Naive thymus-derived CD4-positive, alpha-beta T cell (primary cell): ENCODE measurements at regions of chr20 and their contacts with region 1.

Region 1: DNA sequence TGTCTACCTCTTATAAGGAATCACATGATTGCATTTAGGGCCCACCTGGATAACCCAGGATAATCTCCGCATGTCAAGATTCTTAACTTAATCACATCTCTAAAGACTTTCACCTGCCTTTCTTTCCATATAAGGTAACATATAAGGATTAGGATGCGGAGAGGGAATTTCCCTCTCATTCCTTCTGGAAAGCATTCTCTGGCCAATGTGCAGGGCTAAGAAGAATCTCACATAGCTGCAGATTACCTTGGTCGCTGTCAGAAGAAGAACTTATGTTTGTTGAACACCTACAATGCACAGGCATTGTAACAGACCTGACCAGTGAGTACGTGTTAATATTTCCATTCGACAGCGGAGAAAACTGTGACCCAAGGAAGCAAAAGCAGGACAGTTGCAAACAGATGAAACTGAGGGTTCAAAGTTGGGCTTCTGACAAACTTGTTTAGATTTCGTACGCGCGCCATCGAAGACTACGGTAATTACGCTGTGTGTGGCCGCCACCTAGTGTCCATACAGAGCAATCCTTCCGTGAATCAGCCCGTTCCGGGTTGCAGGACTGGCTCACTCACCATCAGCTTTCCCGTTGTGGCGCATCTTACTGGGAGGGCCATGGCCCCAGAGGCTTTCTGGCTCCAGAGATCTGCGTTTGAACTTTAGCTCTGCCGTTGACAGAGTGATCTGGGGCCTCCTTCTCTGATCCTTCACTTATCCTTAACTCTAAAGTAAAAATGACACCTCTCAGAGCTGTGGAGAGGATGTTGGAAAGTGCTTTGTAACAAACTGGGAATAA is 9.5 kb downstream of the C20orf202 start:
- DNase-seq: peak; percentile 40 to 72 (median 60)
- ATAC-seq: peak; percentile 94
- H3K4me3 ChIP-seq: no peak overlapping the region
- H3K4me3 Mint-ChIP-seq: peak overlapping the region in 4 of 10 donors; percentile 9 to 41 (median 36)
- H3K27ac ChIP-seq: no peak overlapping the region
- H3K27ac Mint-ChIP-seq: peak overlapping the region in 5 of 9 donors; percentile 0 to 97 (median 37)
- H3K4me1 ChIP-seq: peaks cover 5 to 27% of the 10 kb centered on the region in 2 donors
- H3K4me1 Mint-ChIP-seq: peaks cover 21 to 51% (median 36%) of the 10 kb centered on the region in 7 donors
- H3K27me3 ChIP-seq: no peaks in the 10 kb centered on the region
- H3K27me3 Mint-ChIP-seq: peaks cover 0 to 16% (median 0%) of the 10 kb centered on the region in 5 donors

Region 2: GRCh38 chr20:543369-544152 is 669.2 kb before region 1 on chr20 and contains the start of gene CSNK2A1:
- CTCF ChIA-PET with region 1: no interaction called
- POLR2A ChIA-PET with region 1: no interaction called
- intact Hi-C with region 1: loop called in 1 of 2 experiments (anchors 10 kb)
- DNase-seq: peak; percentile 93 to 99 (median 97)
- ATAC-seq: peak; percentile 97
- H3K4me3 ChIP-seq: peak within 1 kb of the TSS; percentile 59
- H3K4me3 Mint-ChIP-seq: peak within 1 kb of the TSS; percentile 86 to 100 (median 91)
- H3K27ac ChIP-seq: peak within 1 kb of the TSS; percentile 94
- H3K27ac Mint-ChIP-seq: peak within 1 kb of the TSS; percentile 97 to 100 (median 98)
- H3K4me1 ChIP-seq: peaks cover 17 to 39% of the 10 kb centered on the region in 2 donors
- H3K4me1 Mint-ChIP-seq: peaks cover 40 to 58% (median 54%) of the 10 kb centered on the region in 7 donors
- H3K27me3 ChIP-seq: no peaks in the 10 kb centered on the region
- H3K27me3 Mint-ChIP-seq: peaks cover 0 to 9% (median 5%) of the 10 kb centered on the region in 5 donors
- total RNA-seq, gene CSNK2A1: 69.7 to 117 (median 90.8) TPM

Region 3: GRCh38 chr20:956330-956951 is 256.4 kb before region 1 on chr20:
- CTCF ChIA-PET with region 1: interaction called, 11 read pairs
- POLR2A ChIA-PET with region 1: no interaction called
- intact Hi-C with region 1: loop called (anchors 1 to 5 kb)
- DNase-seq: peak; percentile 48 to 80 (median 69)
- ATAC-seq: peak; percentile 85
- H3K4me3 ChIP-seq: no peak overlapping the region
- H3K4me3 Mint-ChIP-seq: no peak overlapping the region
- H3K27ac ChIP-seq: no peak overlapping the region
- H3K27ac Mint-ChIP-seq: no peak overlapping the region
- H3K4me1 ChIP-seq: no peaks in the 10 kb centered on the region
- H3K4me1 Mint-ChIP-seq: peaks cover 0 to 8% (median 0%) of the 10 kb centered on the region in 7 donors
- H3K27me3 ChIP-seq: no peaks in the 10 kb centered on the region
- H3K27me3 Mint-ChIP-seq: peaks cover 18 to 55% (median 39%) of the 10 kb centered on the region in 5 donors

Region 4: DNA sequence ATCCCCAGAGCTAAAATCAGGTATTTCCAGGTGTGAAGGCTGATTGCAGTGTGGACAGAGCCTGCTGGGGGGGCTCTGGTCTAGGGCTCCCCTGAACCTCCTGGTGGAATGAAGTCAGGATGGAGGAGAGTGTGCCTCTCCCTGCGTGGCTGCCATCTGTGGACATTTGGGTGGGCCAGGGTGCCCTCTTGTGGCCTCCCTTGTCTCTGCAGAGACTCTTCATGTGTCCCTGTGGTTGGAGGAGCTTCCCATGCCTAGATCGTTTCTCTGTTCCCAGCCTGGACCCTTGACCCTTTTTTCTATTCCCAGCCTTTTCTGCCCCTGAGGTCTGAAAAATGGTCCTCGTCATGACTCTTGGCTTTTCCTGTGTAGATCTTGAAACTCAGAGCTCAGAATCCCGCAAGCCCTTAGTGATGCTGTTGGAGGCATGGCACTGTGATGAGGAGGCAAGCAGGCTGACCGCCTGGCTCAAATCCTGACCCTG is 104.3 kb before region 1 on chr20:
- CTCF ChIA-PET with region 1: interaction called, 20 read pairs
- POLR2A ChIA-PET with region 1: no interaction called
- intact Hi-C with region 1: loop called (anchors 1 kb)
- DNase-seq: peak in 8 of 9 donors; percentile 18 to 51 (median 43)
- ATAC-seq: peak; percentile 87
- H3K4me3 ChIP-seq: no peak overlapping the region
- H3K4me3 Mint-ChIP-seq: no peak overlapping the region
- H3K27ac ChIP-seq: no peak overlapping the region
- H3K27ac Mint-ChIP-seq: peak overlapping the region in 1 of 9 donors; percentile 60
- H3K4me1 ChIP-seq: no peaks in the 10 kb centered on the region
- H3K4me1 Mint-ChIP-seq: peaks cover 5 to 7% (median 6%) of the 10 kb centered on the region in 7 donors
- H3K27me3 ChIP-seq: no peaks in the 10 kb centered on the region
- H3K27me3 Mint-ChIP-seq: peaks cover 0 to 10% (median 0%) of the 10 kb centered on the region in 5 donors

Region 5: GRCh38 chr20:1266167-1266973 is 53.6 kb after region 1 on chr20 and contains the start of gene SNPH:
- CTCF ChIA-PET with region 1: interaction called, 3 read pairs
- POLR2A ChIA-PET with region 1: interaction called, 6 read pairs
- intact Hi-C with region 1: loop called in 1 of 2 experiments (anchors 2 kb)
- DNase-seq: peak; percentile 41 to 79 (median 67)
- ATAC-seq: peak; percentile 93
- H3K4me3 ChIP-seq: peak within 1 kb of the TSS; percentile 66
- H3K4me3 Mint-ChIP-seq: peak within 1 kb of the TSS; percentile 79 to 99 (median 93)
- H3K27ac ChIP-seq: peak within 1 kb of the TSS; percentile 88
- H3K27ac Mint-ChIP-seq: peak within 1 kb of the TSS; percentile 77 to 100 (median 98)
- H3K4me1 ChIP-seq: peaks cover 9 to 54% of the 10 kb centered on the region in 2 donors
- H3K4me1 Mint-ChIP-seq: peaks cover 22 to 87% (median 81%) of the 10 kb centered on the region in 7 donors
- H3K27me3 ChIP-seq: no peaks in the 10 kb centered on the region
- H3K27me3 Mint-ChIP-seq: peaks cover 0 to 5% (median 0%) of the 10 kb centered on the region in 5 donors
- total RNA-seq, gene SNPH: 7.3 to 43.4 (median 22.5) TPM

Region 6: GRCh38 chr20:1299522-1299921 is 86.7 kb after region 1 on chr20:
- CTCF ChIA-PET with region 1: interaction called, 5 read pairs
- POLR2A ChIA-PET with region 1: interaction called, 3 read pairs
- intact Hi-C with region 1: loop called in 1 of 2 experiments (anchors 2 kb)
- DNase-seq: peak in 6 of 9 donors; percentile 12 to 39 (median 32)
- ATAC-seq: peak; percentile 64
- H3K4me3 ChIP-seq: no peak overlapping the region
- H3K4me3 Mint-ChIP-seq: peak overlapping the region in 7 of 10 donors; percentile 40 to 62 (median 58)
- H3K27ac ChIP-seq: peak overlapping the region; percentile 17
- H3K27ac Mint-ChIP-seq: peak overlapping the region; percentile 52 to 93 (median 75)
- H3K4me1 ChIP-seq: peaks cover 12 to 23% of the 10 kb centered on the region in 2 donors
- H3K4me1 Mint-ChIP-seq: peaks cover 20 to 36% (median 32%) of the 10 kb centered on the region in 7 donors
- H3K27me3 ChIP-seq: no peaks in the 10 kb centered on the region
- H3K27me3 Mint-ChIP-seq: no peaks in the 10 kb centered on the region

Region 7: GRCh38 chr20:1465470-1466210 is 252.8 kb after region 1 on chr20:
- CTCF ChIA-PET with region 1: no interaction called
- POLR2A ChIA-PET with region 1: no interaction called
- intact Hi-C with region 1: no loop called
- DNase-seq: peak in 1 of 9 donors; percentile 4
- ATAC-seq: no peak
- H3K4me3 ChIP-seq: peak overlapping the region; percentile 59
- H3K4me3 Mint-ChIP-seq: peak overlapping the region; percentile 81 to 90 (median 86)
- H3K27ac ChIP-seq: peak overlapping the region; percentile 82
- H3K27ac Mint-ChIP-seq: peak overlapping the region in 8 of 9 donors; percentile 51 to 84 (median 78)
- H3K4me1 ChIP-seq: peaks cover 19 to 29% of the 10 kb centered on the region in 2 donors
- H3K4me1 Mint-ChIP-seq: peaks cover 46 to 70% (median 55%) of the 10 kb centered on the region in 7 donors
- H3K27me3 ChIP-seq: no peaks in the 10 kb centered on the region
- H3K27me3 Mint-ChIP-seq: peaks cover 0 to 21% (median 4%) of the 10 kb centered on the region in 5 donors

Region 8: GRCh38 chr20:1503564-1504227 is 290.9 kb after region 1 on chr20:
- CTCF ChIA-PET with region 1: no interaction called
- POLR2A ChIA-PET with region 1: no interaction called
- intact Hi-C with region 1: loop called in 1 of 2 experiments (anchors 5 kb)
- DNase-seq: peak; percentile 31 to 81 (median 78)
- ATAC-seq: peak; percentile 100
- H3K4me3 ChIP-seq: no peak overlapping the region
- H3K4me3 Mint-ChIP-seq: peak overlapping the region in 1 of 10 donors; percentile 51
- H3K27ac ChIP-seq: no peak overlapping the region
- H3K27ac Mint-ChIP-seq: peak overlapping the region in 4 of 9 donors; percentile 3 to 75 (median 20)
- H3K4me1 ChIP-seq: no peaks in the 10 kb centered on the region
- H3K4me1 Mint-ChIP-seq: peaks cover 3 to 8% (median 4%) of the 10 kb centered on the region in 7 donors
- H3K27me3 ChIP-seq: peaks cover 0 to 6% of the 10 kb centered on the region in 2 donors
- H3K27me3 Mint-ChIP-seq: peaks cover 9 to 61% (median 31%) of the 10 kb centered on the region in 5 donors